Lower leg skin (tissue), 4 donors: ENCODE measurements at regions of chr19 and their contacts with region 1.

Region 1: GRCh38 chr19:23384858-23385257 is 10.4 kb downstream of the ZNF91 start:
- DNase-seq: no peak
- H3K4me3 ChIP-seq: no peak overlapping the region
- CTCF ChIP-seq: no peak
- POLR2A ChIP-seq: no peak

Region 2: DNA sequence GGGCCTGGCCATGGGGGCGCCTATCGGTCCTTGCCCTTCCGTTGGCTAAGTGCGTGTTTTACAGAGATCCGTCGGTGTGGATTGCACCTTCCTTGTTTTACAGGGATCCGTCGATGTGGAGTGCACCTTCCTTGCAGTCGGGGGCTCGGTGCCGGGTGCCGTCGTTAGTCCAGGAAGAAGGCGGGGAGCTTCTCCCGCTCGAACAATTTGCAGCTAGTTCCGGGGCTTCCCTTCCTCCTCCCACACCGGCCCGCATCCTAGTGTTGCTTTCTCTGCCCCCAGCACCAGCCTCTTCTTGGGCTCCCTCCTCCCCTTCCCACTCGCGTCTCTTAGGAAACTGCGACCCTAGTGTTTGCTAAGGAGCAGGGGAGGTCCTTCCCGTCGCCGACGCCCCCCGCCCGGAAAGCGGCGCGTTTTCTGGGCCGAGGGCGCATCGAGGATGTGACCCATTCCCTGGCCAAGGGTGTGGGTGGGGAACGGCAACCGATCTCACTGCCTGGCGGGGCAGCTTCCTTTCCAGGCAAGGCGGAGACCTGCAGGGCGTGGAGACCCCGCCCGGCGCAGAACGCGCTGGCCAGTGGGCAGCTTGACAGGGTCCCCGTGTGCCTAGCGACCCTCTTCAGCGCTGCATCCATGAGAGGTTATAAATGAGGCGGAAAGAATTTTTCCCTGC is 86.2 kb after region 1 on chr19:
- intact Hi-C with region 1: no loop called
- DNase-seq: no peak
- H3K4me3 ChIP-seq: peak overlapping the region; percentile 1
- CTCF ChIP-seq: no peak
- POLR2A ChIP-seq: no peak

Region 3: DNA sequence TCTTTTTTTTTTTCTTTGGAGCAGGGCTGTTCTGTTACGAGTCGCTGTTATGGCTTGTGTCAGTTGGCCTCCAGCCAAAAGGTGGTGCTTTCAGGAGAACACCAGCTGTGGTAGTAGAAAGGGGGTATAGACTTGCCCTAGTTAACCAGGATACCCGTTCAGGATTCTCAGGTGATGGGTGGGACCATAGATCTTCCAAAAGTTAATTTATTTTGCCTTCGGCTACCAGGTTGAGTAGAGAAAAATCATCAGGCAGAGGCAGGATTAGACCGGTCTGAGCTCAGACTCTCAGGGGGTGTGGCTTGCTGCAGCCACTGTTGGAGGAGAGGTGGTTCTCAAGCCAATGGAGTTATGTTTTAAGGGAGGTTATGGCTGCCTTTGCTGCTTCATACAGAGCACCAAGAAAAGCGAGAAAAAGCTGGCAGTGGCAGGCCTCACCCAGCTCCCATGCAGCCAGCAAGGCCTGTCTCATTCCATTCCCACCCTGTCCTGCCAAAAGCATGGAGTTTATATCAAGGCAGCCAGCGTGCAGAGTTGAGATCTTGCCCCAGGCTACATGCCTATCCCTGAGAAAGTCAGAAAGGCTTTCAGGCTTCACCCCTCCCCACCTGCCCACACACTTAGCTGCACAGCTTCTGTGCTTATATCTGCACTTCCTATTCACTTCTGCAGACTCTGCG is 314.4 kb after region 1 on chr19:
- intact Hi-C with region 1: no loop called
- DNase-seq: peak in 1 of 2 donors; percentile 61
- H3K4me3 ChIP-seq: no peak overlapping the region
- CTCF ChIP-seq: no peak
- POLR2A ChIP-seq: no peak

Region 4: DNA sequence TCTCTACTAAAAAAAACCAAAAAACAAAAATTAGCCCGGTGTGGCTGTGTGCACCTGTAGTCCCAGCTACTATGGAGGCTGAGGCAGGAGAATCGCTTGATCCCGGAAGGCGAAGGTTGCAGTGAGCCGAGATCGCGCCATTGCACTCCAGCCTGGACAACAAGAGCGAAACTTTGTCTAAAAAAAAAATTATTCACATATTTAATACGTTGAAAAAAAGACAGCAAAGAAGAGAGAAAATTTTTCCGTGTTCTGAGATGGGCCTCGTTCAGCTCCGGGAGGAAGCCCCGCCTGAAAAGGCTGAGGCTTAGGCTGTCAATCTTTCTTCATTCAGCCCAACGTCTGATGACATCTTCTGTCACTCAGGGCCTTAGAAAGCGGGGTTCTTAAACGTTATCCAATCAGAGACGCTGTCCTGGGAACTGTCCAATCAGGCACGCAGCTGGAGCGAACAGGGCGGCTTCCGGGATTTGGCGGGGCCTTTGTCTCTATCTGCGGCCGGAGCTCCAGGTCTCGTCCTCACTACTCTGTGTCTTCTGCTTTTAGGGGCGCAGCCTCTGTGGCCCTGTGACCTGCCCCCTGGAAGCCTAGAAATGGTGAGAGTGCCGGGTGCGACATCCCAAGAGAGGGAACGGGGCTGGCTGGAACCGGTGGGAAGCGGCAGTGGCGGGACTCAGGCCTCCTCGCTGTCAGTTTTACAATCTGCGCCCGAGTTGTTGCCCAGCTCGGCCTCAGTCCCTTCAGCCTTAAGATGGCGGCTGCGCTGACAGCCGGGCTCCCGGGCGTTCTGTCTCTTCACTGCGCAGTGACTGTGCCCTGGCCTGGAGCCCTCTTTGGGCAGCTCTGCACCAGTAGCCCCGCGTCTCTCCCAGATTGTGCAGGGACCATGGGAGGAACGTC is 529.8 kb after region 1 on chr19 and contains the start of gene ZNF726:
- intact Hi-C with region 1: loop called (anchors 5 kb)
- DNase-seq: peak; percentile 91 to 97
- H3K4me3 ChIP-seq: peak within 1 kb of the TSS; percentile 38
- CTCF ChIP-seq: no peak
- POLR2A ChIP-seq: no peak
- total RNA-seq, gene ZNF726: 1.5 to 12.8 (median 5.6) TPM